Left cardiac atrium (tissue), 4 donors: ENCODE measurements at regions of chr10 and their contacts with region 1.

Region 1: GRCh38 chr10:28587970-28588290 is 55.0 kb downstream of the WAC start:
- DNase-seq: no peak
- ATAC-seq: peak; percentile 79 to 82

Region 2: GRCh38 chr10:28432210-28432676 is 155.7 kb before region 1 on chr10:
- intact Hi-C with region 1: loop called in 1 of 2 experiments (anchors 10 kb)
- DNase-seq: peak; percentile 62
- ATAC-seq: peak; percentile 87 to 88

Region 3: DNA sequence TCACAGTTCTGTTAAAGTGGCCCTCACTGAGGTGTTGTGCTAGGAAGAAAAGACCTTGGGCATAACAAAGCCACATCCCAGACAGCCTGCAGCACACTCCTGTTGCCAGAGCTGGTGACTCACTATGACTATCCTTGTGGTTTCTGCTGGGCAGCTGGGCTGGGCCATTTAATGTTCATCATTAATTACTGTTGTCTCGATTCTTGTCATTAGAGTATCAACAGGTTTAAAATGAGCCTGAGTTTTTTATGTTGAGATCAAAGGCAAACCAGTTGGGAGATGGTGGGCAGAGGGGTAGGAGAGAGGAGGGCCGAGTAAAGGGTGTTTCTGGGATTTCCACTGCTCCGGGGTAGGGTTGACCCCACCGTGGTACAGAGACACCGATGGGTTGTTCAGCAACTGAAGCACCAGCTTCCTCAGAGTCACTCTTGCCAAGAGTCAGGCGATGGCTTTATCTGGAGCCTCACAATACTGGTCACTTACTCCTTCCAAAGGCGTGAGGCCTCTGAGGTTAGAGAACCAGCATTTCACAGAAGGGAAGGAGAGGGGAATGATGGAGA is 572.3 kb after region 1 on chr10:
- intact Hi-C with region 1: no loop called
- DNase-seq: no peak
- ATAC-seq: peak in 1 of 2 donors; percentile 30